CD8-positive, alpha-beta T cell (primary cell): ENCODE measurements at regions of chr2 and their contacts with region 1.

Region 1: DNA sequence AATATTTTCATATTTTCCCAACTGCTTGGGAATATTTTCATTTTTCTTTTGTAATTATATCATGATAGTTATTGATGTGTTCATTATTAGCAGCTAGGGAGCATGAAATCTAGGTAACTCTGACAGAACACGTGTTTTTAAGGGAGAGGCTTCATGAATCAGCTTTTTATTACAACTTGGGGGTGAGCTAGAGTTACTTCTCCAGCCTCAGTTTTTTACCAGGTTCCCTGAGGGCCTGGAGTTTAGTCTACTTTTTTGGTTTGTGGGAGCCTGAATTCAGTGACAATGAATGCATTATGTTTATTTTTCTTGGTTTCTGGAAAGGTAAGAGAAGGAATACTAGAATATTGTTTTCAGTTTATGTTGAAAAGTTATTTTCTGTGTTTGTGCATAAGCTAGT is 18.0 kb downstream of the NAB1 start:
- DNase-seq: no peak
- ATAC-seq: no peak
- H3K4me3 ChIP-seq: no peak overlapping the region
- H3K4me3 Mint-ChIP-seq: no peak overlapping the region
- H3K27ac ChIP-seq: no peak overlapping the region
- H3K27ac Mint-ChIP-seq: no peak overlapping the region
- H3K4me1 ChIP-seq: no peaks in the 10 kb centered on the region
- H3K4me1 Mint-ChIP-seq: peaks cover 32% of the 10 kb centered on the region
- H3K27me3 ChIP-seq: no peaks in the 10 kb centered on the region
- H3K27me3 Mint-ChIP-seq: no peaks in the 10 kb centered on the region
- CTCF ChIP-seq: no peak

Region 2: DNA sequence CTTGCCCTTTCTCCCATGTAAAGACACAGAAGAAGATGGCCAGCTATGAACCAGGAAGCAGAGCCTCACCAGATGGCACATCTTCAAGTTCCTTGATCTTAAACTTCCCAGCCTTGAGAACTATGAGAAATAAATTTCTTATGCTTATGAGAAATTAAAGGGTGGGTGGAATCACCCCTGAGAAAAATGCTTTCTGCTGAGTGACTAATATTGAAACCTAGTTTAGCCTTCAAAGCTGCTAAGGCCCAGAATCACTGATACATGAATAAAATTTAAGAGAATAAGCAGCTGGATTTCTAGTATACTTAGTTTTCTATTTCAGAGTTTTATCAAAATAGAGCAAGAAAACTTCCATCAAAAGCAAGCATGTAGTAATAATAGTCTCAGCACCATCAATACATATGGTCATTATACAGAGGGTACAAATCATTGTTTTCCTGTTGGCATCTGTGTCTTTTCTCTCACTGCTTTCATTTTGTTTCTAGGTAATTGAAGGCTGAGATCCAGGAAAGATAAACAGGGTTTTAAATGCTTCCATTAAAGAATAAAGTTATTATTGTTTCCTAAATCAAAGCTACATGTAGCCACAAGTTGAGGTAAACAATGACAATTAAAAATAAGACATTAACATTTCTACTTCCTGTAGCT is 1434.0 kb before region 1 on chr2:
- CTCF ChIA-PET with region 1: no interaction called
- POLR2A ChIA-PET with region 1: no interaction called
- intact Hi-C with region 1: no loop called
- DNase-seq: no peak
- ATAC-seq: no peak
- H3K4me3 ChIP-seq: no peak overlapping the region
- H3K4me3 Mint-ChIP-seq: no peak overlapping the region
- H3K27ac ChIP-seq: no peak overlapping the region
- H3K27ac Mint-ChIP-seq: peak overlapping the region; percentile 24
- H3K4me1 ChIP-seq: no peaks in the 10 kb centered on the region
- H3K4me1 Mint-ChIP-seq: peaks cover 4% of the 10 kb centered on the region
- H3K27me3 ChIP-seq: no peaks in the 10 kb centered on the region
- H3K27me3 Mint-ChIP-seq: no peaks in the 10 kb centered on the region
- CTCF ChIP-seq: no peak

Region 3: GRCh38 chr2:190526105-190526750 is 140.7 kb before region 1 on chr2:
- CTCF ChIA-PET with region 1: no interaction called
- POLR2A ChIA-PET with region 1: no interaction called
- intact Hi-C with region 1: no loop called
- DNase-seq: peak in 1 of 9 experiments; percentile 23
- ATAC-seq: no peak
- H3K4me3 ChIP-seq: no peak overlapping the region
- H3K4me3 Mint-ChIP-seq: no peak overlapping the region
- H3K27ac ChIP-seq: no peak overlapping the region
- H3K27ac Mint-ChIP-seq: peak overlapping the region; percentile 11
- H3K4me1 ChIP-seq: peaks cover 21% of the 10 kb centered on the region
- H3K4me1 Mint-ChIP-seq: peaks cover 63% of the 10 kb centered on the region
- H3K27me3 ChIP-seq: no peaks in the 10 kb centered on the region
- H3K27me3 Mint-ChIP-seq: no peaks in the 10 kb centered on the region
- CTCF ChIP-seq: no peak

Region 4: DNA sequence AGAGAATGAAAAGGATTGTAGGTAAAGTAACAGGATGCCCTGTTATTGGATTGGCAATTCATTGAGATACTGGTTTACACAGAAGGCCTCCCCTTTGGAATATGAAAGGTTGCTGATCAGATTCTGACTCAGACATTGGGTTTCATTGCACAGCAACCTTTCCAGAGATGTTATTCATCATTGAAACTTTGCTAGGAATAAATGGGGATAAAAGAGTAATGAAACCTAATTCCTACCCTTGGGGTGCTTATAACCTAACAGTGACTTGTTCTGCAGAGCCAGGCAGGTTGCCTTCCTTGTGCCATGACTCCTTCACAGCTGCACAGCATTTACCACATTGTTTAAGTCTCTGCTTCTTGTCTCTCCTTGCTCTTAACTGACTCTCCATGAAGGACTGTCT is 13.0 kb before region 1 on chr2:
- CTCF ChIA-PET with region 1: interaction called, 5 read pairs
- POLR2A ChIA-PET with region 1: interaction called, 4 read pairs
- intact Hi-C with region 1: loop called in 1 of 2 experiments (anchors 2 kb)
- DNase-seq: no peak
- ATAC-seq: no peak
- H3K4me3 ChIP-seq: no peak overlapping the region
- H3K4me3 Mint-ChIP-seq: no peak overlapping the region
- H3K27ac ChIP-seq: no peak overlapping the region
- H3K27ac Mint-ChIP-seq: no peak overlapping the region
- H3K4me1 ChIP-seq: peaks cover 24% of the 10 kb centered on the region
- H3K4me1 Mint-ChIP-seq: peaks cover 56% of the 10 kb centered on the region
- H3K27me3 ChIP-seq: no peaks in the 10 kb centered on the region
- H3K27me3 Mint-ChIP-seq: no peaks in the 10 kb centered on the region
- CTCF ChIP-seq: no peak

Region 5: GRCh38 chr2:190755772-190756415 is 89.0 kb after region 1 on chr2:
- CTCF ChIA-PET with region 1: no interaction called
- POLR2A ChIA-PET with region 1: no interaction called
- intact Hi-C with region 1: no loop called
- DNase-seq: no peak
- ATAC-seq: no peak
- H3K4me3 ChIP-seq: no peak overlapping the region
- H3K4me3 Mint-ChIP-seq: no peak overlapping the region
- H3K27ac ChIP-seq: no peak overlapping the region
- H3K27ac Mint-ChIP-seq: no peak overlapping the region
- H3K4me1 ChIP-seq: no peaks in the 10 kb centered on the region
- H3K4me1 Mint-ChIP-seq: peaks cover 5% of the 10 kb centered on the region
- H3K27me3 ChIP-seq: no peaks in the 10 kb centered on the region
- H3K27me3 Mint-ChIP-seq: no peaks in the 10 kb centered on the region
- CTCF ChIP-seq: no peak